ENCODE measurements at regions of chr16 and their contacts with region 1.

Region 1: GRCh38 chr16:47861999-47862398 is 293.8 kb downstream of the ABCC12 start:
- DNase-seq: no peak
- ATAC-seq: no peak
- H3K4me3 ChIP-seq: no peak overlapping the region
- H3K27ac ChIP-seq: no peak overlapping the region
- H3K4me1 ChIP-seq: no peaks in the 10 kb centered on the region
- H3K27me3 ChIP-seq: peaks cover 18% of the 10 kb centered on the region
- CTCF ChIP-seq: no peak
- POLR2A ChIP-seq: no peak
- RAD21 ChIP-seq: no peak

Region 2: DNA sequence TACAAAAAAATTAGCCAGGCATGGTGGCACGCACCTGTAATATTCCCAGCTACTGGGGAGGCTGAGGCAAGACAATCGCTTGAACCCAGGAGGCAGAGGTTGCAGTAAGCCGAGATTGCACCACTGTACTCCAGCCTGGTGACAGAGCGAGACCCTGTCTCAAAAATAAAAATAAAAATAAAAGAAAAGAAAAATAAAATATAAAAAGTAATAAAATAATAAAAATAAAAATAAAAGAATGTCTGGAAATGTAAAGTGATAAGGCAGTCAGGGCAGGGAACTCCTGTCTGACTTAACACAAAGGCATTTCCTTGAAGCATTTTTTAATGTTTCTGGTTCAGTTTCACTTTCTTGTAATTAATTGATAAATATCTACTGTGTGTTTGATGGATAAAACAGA is 853.8 kb before region 1 on chr16:
- CTCF ChIA-PET with region 1: no interaction called
- POLR2A ChIA-PET with region 1: no interaction called
- dilution Hi-C with region 1: no loop called
- in situ Hi-C with region 1: no loop called
- intact Hi-C with region 1: no loop called
- DNase-seq: peak; percentile 25
- ATAC-seq: peak; percentile 32
- H3K4me3 ChIP-seq: no peak overlapping the region
- H3K27ac ChIP-seq: no peak overlapping the region
- H3K4me1 ChIP-seq: peaks cover 2% of the 10 kb centered on the region; the same call in 1 of the 2 replicates
- H3K27me3 ChIP-seq: peaks cover 2% of the 10 kb centered on the region; the same call in 1 of the 2 replicates
- CTCF ChIP-seq: no peak
- POLR2A ChIP-seq: no peak
- RAD21 ChIP-seq: no peak

Region 3: GRCh38 chr16:47834485-47835024 is 27.4 kb before region 1 on chr16:
- CTCF ChIA-PET with region 1: no interaction called
- POLR2A ChIA-PET with region 1: no interaction called
- dilution Hi-C with region 1: no loop called
- in situ Hi-C with region 1: no loop called
- intact Hi-C with region 1: loop called (anchors 1 kb)
- DNase-seq: no peak
- ATAC-seq: no peak
- H3K4me3 ChIP-seq: no peak overlapping the region
- H3K27ac ChIP-seq: no peak overlapping the region
- H3K4me1 ChIP-seq: no peaks in the 10 kb centered on the region
- H3K27me3 ChIP-seq: no peaks in the 10 kb centered on the region
- CTCF ChIP-seq: no peak
- POLR2A ChIP-seq: no peak
- RAD21 ChIP-seq: no peak

Region 4: DNA sequence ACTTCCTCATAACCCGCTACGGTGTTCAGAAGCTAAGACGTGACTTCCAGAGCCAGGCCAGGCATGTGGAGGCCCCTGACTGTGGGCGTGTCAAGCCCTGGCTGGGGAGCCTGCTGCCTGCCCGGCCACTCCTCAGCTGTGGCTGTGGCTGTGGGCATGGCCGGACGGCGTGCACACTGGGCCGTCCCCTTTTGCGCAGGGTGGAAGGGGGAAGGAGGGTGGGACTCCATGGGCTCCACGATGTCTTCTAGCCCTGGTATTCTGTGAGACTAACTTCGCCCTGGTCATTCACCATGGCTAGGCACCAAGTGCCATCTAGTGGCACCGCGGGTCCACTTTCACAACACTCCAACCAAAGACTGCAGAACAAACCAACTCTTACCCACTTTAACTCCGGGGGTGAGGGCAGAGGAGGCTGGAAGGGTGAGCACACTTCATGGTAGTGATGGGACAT is 680.0 kb after region 1 on chr16:
- CTCF ChIA-PET with region 1: no interaction called
- POLR2A ChIA-PET with region 1: no interaction called
- dilution Hi-C with region 1: no loop called
- in situ Hi-C with region 1: no loop called
- intact Hi-C with region 1: no loop called
- DNase-seq: peak; percentile 54
- ATAC-seq: peak; percentile 79
- H3K4me3 ChIP-seq: no peak overlapping the region
- H3K27ac ChIP-seq: no peak overlapping the region
- H3K4me1 ChIP-seq: peaks cover 5% of the 10 kb centered on the region; the same call in 1 of the 2 replicates
- H3K27me3 ChIP-seq: no peaks in the 10 kb centered on the region
- CTCF ChIP-seq: peak; percentile 68
- POLR2A ChIP-seq: 0 out of 2 replicates have a peak, but pooled peaks have one; percentile 35
- RAD21 ChIP-seq: peak; percentile 89